Posterior vena cava (tissue), 2 donors: ENCODE measurements at regions of chr9 and their contacts with region 1.

Region 1: DNA sequence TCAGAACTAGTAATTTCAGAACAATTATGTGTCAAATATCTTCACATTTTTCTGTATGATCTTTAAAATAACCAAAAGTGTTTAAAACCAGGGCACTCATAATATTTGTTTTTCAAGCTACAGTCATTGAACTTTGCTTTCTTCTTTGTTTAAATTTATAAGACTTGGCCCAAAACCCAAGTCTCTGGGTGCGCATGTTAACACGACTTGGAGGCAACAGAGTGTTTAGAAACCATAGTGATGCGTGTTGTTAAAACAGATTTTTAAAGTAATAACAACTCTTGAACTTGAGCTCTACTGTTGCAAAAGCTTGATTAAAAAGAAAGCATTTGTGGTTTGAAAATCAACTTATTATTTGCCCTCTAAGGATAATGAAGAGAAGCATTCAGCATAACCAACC is 26.0 kb upstream of the GRIN3A start:
- DNase-seq: no peak

Region 2: GRCh38 chr9:101458955-101459631 is 305.4 kb before region 1 on chr9:
- intact Hi-C with region 1: no loop called
- DNase-seq: no peak

Region 3: DNA sequence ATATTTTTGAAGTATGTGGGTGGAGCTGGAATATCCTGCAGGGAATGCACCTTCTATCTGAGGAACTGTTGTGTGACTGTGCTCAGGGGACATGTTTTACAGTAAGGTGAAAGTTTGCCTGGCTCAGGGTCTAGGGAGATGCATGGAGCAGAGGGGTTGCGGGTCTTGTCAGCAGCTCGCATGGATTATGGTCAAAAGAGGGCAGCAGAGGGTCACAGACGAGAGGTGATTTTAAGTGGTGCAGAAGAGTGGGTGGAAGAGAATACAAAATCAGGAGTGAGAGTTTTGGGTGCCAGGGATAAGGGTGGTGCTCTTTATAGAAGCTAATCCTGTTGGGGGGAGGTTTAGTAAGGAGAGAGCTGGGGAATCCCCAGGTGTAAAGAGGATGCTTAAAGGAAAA is 27.5 kb after region 1 on chr9:
- intact Hi-C with region 1: no loop called
- DNase-seq: no peak

Region 4: DNA sequence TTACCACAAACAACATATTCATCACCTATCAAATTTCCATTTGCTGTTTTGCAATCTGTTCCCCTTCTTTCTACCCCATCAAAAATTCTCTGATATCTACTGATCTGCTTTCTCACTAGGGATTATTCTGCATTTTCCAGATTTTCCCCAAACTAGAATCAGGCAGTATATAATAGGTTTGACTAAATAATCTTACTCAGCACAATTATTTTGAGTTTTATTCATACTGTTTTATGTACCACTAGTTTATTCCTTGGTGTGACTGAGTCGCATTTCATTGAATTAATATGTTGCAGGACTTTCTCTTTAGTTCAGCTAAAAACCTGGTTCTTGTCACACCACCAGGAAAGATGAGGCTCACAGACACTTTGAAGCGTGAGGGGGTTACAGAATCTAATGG is 1362.0 kb after region 1 on chr9:
- intact Hi-C with region 1: loop called in 1 of 2 experiments (anchors 5 kb)
- DNase-seq: no peak